Colonic mucosa (tissue), 4 donors: ENCODE measurements at regions of chr6 and their contacts with region 1.

Region 1: GRCh38 chr6:31659649-31660380 is 763 bp downstream of the C6orf47 start:
- DNase-seq: no peak
- H3K4me3 ChIP-seq: peak overlapping the region; percentile 76
- H3K27ac ChIP-seq: peak overlapping the region; percentile 89
- H3K4me1 ChIP-seq: peaks cover 26% of the 10 kb centered on the region
- H3K27me3 ChIP-seq: no peaks in the 10 kb centered on the region
- CTCF ChIP-seq: no peak

Region 2: DNA sequence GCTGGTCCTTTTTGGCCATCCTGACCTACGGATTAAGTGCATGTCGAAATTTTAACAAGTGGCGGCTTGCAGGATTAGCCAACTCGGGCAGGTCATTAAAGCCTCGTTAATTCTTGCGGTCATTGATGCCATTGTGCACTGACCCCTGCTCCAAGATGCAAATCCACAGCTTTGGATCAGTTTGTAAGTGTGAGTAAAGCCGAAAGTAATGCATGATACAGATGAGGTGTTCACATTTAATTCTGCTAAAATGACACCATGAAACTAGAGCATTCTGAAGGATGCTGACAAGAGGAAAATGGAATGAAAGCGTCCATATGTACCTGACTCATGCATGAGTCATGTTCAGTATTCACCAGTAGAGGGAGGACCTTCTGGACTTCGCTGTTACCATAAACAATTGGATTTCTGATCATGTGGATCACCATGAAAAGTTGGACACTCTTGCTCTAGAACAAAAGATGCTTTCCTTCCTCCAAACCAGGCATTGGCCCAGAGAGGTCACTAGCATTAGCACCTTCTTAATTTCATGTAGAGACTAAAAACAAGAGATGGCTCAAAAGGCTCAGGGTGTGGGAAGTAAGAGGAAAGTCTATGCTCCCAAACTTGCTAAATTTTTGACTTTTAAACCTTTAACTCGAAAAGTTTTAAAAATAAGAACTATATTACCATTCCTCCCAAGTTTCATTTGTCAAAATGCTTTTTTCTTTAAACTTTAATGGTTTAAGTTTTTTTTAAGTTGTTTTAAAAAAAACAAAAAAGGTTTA is 601.5 kb before region 1 on chr6:
- intact Hi-C with region 1: no loop called
- DNase-seq: no peak
- H3K4me3 ChIP-seq: no peak overlapping the region
- H3K27ac ChIP-seq: no peak overlapping the region
- H3K4me1 ChIP-seq: no peaks in the 10 kb centered on the region
- H3K27me3 ChIP-seq: no peaks in the 10 kb centered on the region
- CTCF ChIP-seq: peak; percentile 45

Region 3: GRCh38 chr6:31619805-31620585 is 39.8 kb before region 1 on chr6:
- intact Hi-C with region 1: loop called (anchors 5 kb)
- DNase-seq: peak; percentile 97
- H3K4me3 ChIP-seq: peak overlapping the region; percentile 68
- H3K27ac ChIP-seq: peak overlapping the region; percentile 93
- H3K4me1 ChIP-seq: peaks cover 4% of the 10 kb centered on the region
- H3K27me3 ChIP-seq: no peaks in the 10 kb centered on the region
- CTCF ChIP-seq: no peak